Posterior vena cava (tissue), 2 donors: ENCODE measurements at regions of chr4 and their contacts with region 1.

Region 1: GRCh38 chr4:37693450-37694190 is 7.4 kb upstream of the RELL1 start:
- DNase-seq: no peak

Region 2: DNA sequence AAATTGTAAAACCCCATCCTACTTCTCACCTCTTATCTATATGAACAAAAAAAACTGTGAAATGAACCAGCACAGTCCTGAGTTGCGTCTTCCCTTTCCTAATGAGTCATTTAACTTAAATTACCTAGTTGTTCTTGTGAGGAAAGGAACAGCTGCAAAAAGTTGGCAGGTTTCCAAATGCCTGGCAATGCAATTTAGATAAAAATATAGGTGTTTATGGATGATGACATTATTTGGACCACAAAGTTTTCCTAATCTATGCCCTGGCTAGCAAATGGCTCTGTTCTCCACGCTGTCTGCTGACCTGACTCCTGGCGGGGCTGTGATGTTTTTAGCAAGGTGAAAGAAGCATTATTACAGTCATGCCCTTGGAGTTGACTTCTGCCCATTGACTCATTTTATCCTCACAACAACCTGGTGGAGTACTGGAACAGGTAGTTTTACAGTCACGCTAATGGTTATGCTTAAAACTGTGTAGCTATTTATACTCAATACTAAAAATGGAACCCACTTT is 22.3 kb after region 1 on chr4:
- intact Hi-C with region 1: no loop called
- DNase-seq: no peak

Region 3: DNA sequence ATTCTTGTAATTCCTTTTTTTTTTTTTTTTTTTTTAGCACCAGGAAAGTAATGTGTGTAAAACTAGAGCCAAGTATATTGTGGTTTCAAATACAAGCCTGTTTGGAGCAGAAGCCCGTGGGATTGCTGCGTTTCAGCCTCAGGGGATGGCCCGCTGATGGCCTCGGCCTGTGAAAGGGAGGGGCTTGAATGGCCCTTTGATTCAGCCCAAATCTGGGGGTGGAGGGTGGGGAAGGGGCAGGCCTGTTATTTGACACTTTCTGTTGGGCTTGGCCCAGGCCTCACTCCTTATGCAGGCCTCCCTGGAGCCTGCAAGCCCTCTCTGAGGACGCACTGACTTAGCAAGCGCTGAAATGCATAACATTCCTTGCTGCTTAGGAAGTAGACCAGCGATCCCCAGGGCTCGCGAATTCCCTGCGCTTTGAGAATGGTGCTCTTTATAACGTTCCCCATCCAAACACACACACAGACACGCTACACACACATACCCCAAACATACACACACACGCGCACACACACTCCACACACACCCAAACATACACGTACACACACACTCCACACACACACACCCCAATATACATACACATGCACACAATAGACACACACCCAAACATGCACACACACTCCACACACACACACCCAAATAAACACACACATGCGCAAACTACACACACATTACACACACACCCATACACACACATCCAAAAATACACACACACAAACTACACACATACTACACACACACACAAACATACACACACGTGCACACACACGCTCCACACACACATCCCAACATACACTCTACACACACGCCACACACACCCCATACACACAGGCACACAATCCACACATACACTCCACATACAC is 1059.6 kb after region 1 on chr4:
- intact Hi-C with region 1: loop called in 1 of 2 experiments (anchors 5 kb)
- DNase-seq: peak; percentile 94

Region 4: DNA sequence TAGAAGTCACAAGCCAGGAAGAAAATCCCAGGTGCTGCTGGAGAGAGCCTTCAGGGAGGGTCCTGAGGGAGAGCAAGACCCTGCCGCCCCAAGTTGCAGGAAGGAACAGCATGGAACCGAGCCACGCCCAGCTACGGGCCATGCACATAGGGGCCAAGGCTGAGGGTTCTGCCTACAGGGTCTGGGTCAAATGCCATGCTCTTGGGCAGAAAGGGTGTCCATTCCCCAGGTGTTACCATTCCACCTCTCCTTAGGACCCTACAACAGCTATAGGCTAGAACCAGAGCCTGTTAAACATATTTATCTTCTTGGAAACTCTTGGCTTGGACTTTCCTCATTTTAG is 1742.6 kb after region 1 on chr4:
- intact Hi-C with region 1: no loop called
- DNase-seq: no peak